ENCODE measurements at regions of chr1 and their contacts with region 1.

Region 1: GRCh38 chr1:7667625-7668218 is 103.4 kb upstream of the VAMP3 start:
- DNase-seq: peak; percentile 82 to 85 (median 84)
- ATAC-seq: peak; percentile 85
- H3K4me3 ChIP-seq: no peak overlapping the region
- H3K27ac ChIP-seq: no peak overlapping the region
- H3K4me1 ChIP-seq: peaks cover 0 to 35% of the 10 kb centered on the region in 2 experiments; a peak in 2 of 5 replicates
- H3K27me3 ChIP-seq: peaks cover 27 to 58% of the 10 kb centered on the region in 2 experiments; a peak in 4 of 5 replicates
- CTCF ChIP-seq: peak; percentile 99
- EP300 ChIP-seq: no peak
- POLR2A ChIP-seq: no peak
- RAD21 ChIP-seq: peak; percentile 94 to 98

Region 2: DNA sequence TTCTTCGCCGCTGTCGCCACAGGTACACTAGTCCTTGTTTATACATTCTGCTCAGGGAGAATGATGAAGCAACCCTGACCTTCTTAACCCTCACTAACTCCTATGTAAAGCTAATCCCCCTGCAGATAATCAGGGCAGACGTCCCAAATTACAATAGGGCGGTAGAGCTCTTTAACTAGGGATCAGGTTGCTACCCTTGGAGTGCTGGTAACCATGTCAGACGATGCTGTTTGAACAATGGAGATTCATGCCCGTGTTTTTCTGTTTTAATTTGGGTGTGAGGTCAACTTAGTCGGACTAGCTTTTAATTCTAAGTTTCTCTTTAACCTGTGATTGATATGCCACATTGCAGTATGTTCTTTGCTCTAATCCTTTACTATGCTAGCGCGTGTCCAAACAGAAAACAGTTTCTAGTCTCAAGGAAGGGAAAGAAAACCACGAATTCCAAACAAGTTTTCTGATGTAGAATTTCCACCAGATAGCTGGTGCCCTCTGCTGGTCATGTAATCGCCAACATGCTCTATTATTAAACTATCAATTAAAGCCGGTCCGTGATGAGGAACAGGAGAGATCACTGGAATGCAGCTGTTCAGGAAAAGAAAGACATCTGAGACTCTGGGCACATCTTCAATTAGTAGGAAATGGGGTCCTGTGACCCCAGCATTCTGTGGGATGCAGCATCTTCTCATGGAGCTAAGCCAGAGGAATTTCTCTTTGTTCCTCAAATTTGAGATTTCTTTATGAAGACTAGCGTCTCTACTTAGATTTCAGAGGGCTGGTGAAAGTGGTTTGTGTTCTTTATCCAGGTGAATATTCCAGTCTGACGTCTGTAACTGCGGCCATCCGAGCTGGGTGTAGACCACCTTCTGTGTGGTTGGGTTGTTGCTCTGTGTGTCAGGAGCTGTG is 85.0 kb after region 1 on chr1:
- CTCF ChIA-PET with region 1: interaction called, 58 read pairs
- POLR2A ChIA-PET with region 1: interaction called, 6 read pairs
- in situ Hi-C with region 1: loop called (anchors 5 kb)
- intact Hi-C with region 1: loop called (anchors 1 kb)
- DNase-seq: peak; percentile 34 to 71 (median 50)
- ATAC-seq: peak; percentile 75
- H3K4me3 ChIP-seq: no peak overlapping the region
- H3K27ac ChIP-seq: no peak overlapping the region
- H3K4me1 ChIP-seq: no peaks in the 10 kb centered on the region
- H3K27me3 ChIP-seq: peaks cover 21 to 35% of the 10 kb centered on the region in 2 experiments
- CTCF ChIP-seq: peak; percentile 73 to 87 (median 87)
- EP300 ChIP-seq: no peak
- POLR2A ChIP-seq: no peak
- RAD21 ChIP-seq: peak; percentile 57 to 84

Measured in K562 (cell line).